HEK293 (cell line): ENCODE measurements at regions of chr17 and their contacts with region 1.

Region 1: GRCh38 chr17:7561028-7561575 is 617 bp upstream of the SENP3 start:
- H3K4me3 ChIP-seq: peak overlapping the region; percentile 85
- H3K27ac ChIP-seq: peak overlapping the region; percentile 93
- H3K4me1 ChIP-seq: peaks cover 11% of the 10 kb centered on the region
- CTCF ChIP-seq: peak; percentile 90

Region 2: GRCh38 chr17:7314719-7315569 is 246.2 kb before region 1 on chr17 and contains the start of gene GPS2:
- CTCF ChIA-PET with region 1: interaction called, 10 read pairs
- POLR2A ChIA-PET with region 1: no interaction called
- H3K4me3 ChIP-seq: peak within 1 kb of the TSS; percentile 87
- H3K27ac ChIP-seq: peak within 1 kb of the TSS; percentile 98
- H3K4me1 ChIP-seq: peaks cover 11% of the 10 kb centered on the region
- CTCF ChIP-seq: no peak; the same call in 1 of the 2 replicates

Region 3: DNA sequence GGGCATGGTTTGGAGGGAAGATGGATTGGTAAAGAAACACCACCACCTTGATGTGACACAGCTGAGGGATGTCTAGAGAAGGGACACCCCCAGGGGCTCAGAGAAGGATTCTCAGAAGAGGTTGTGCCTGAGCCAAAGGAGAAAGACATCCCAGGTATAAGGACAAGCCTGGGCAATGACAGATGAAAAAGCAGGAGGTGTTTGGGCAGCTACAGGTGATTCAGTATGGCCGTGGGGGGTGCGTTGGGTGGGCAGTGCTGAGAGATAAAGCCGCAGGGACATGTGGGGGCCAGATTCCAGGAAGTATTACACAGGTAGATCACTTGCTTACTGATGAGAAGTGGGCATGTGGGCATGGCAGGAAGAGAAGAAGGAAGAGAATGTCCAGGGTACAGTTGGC is 199.2 kb before region 1 on chr17:
- CTCF ChIA-PET with region 1: interaction called, 87 read pairs
- POLR2A ChIA-PET with region 1: interaction called, 8 read pairs
- H3K4me3 ChIP-seq: no peak overlapping the region
- H3K27ac ChIP-seq: no peak overlapping the region
- H3K4me1 ChIP-seq: no peaks in the 10 kb centered on the region
- CTCF ChIP-seq: no peak

Region 4: DNA sequence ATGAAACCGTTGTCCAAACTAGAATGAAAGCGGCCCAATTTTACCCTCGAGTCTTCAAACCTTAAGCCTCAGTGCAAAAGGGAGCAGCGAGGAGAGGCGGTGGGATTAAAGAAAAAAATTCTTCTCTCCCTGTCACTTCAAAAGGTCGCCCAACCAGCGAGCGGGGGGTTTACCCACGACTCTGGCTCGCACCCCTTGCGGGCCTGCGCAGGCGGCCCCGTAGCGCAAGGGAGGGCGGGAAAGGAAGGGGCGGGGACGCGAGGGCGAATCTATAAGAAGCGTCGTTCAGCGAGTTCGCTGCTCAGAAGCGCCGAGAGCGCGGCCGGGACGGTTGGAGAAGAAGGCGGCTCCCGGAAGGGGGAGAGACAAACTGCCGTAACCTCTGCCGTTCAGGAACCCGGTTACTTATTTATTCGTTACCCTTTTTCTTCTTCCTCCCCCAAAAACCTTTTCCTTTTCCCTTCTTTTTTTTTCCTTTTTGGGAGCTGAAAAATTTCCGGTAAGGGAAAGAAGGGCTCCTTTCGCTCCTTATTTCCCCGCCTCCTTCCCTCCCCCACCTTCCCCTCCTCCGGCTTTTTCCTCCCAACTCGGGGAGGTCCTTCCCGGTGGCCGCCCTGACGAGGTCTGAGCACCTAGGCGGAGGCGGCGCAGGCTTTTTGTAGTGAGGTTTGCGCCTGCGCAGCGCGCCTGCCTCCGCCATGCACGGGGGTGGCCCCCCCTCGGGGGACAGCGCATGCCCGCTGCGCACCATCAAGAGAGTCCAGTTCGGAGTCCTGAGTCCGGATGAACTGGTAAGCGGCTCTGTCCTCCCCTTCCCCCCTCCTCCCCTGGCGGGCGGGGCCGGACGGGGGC is 76.8 kb before region 1 on chr17 and contains the start of gene POLR2A:
- CTCF ChIA-PET with region 1: interaction called, 13 read pairs
- POLR2A ChIA-PET with region 1: interaction called, 17 read pairs
- H3K4me3 ChIP-seq: peak within 1 kb of the TSS; percentile 87
- H3K27ac ChIP-seq: peak within 1 kb of the TSS; percentile 100
- H3K4me1 ChIP-seq: peaks cover 23% of the 10 kb centered on the region
- CTCF ChIP-seq: no peak

Region 5: DNA sequence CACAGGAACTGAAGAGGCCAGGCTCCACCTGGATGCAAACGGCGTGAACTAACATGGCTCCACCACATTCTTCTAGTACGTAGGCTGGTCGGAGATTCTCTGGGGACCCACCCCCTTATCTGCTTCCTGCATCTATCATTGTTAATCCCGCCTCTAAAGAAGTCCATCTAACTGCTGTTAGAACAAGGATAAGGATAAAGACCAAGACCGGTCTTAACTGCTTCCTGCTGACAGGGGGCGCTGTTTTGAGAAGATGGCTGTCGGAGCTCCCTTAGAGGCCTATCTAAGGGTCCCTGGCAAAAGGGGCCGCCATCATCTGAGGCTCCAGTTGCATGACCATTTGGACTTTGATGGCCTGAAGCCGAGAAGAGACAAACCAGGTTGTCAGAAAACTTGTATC is 38.1 kb before region 1 on chr17:
- CTCF ChIA-PET with region 1: interaction called, 19 read pairs
- POLR2A ChIA-PET with region 1: no interaction called
- H3K4me3 ChIP-seq: no peak overlapping the region
- H3K27ac ChIP-seq: no peak overlapping the region
- H3K4me1 ChIP-seq: no peaks in the 10 kb centered on the region
- CTCF ChIP-seq: no peak

Region 6: DNA sequence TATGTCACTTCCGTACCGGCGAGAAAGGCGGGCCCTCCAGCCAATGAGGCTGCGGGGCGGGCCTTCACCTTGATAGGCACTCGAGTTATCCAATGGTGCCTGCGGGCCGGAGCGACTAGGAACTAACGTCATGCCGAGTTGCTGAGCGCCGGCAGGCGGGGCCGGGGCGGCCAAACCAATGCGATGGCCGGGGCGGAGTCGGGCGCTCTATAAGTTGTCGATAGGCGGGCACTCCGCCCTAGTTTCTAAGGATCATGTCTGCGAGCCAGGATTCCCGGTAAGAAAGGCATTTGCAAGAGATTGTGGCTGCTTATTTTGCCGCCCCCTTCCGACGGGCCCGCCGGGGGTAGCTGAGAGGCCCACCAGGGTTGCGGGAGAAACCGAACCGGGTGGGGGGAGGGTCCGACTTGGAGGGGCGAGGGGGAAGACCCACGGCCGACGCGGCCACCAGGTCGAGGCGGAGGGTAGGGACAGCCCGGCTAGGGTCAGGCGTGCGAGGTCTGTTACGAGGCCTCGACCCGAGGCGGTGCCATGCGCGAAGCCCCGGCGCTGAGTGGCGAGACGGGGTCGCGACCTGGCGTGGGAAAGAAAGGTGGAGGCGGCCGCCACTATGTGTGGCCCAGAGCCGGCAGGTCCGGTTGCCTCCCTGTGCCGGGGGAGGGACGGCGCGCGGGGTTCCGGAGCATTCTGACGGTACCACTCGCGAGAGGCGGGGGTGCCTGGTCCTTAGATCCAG is 11.7 kb after region 1 on chr17:
- CTCF ChIA-PET with region 1: interaction called, 35 read pairs
- POLR2A ChIA-PET with region 1: interaction called, 14 read pairs
- H3K4me3 ChIP-seq: peak overlapping the region; percentile 97
- H3K27ac ChIP-seq: peak overlapping the region; percentile 98
- H3K4me1 ChIP-seq: peaks cover 5% of the 10 kb centered on the region
- CTCF ChIP-seq: 0 out of 2 replicates have a peak, but pooled peaks have one; percentile 38

Region 7: GRCh38 chr17:7803981-7804380 is 242.9 kb after region 1 on chr17:
- CTCF ChIA-PET with region 1: no interaction called
- POLR2A ChIA-PET with region 1: no interaction called
- H3K4me3 ChIP-seq: no peak overlapping the region
- H3K27ac ChIP-seq: no peak overlapping the region
- H3K4me1 ChIP-seq: no peaks in the 10 kb centered on the region
- CTCF ChIP-seq: no peak